Activated CD4-positive, alpha-beta memory T cell treated with anti-CD3 and anti-CD28 coated beads for 36 hours (primary cell): ENCODE measurements at regions of chr4 and their contacts with region 1.

Region 1: GRCh38 chr4:105135785-105136184 is 10.9 kb upstream of the TET2 start:
- DNase-seq: no peak
- H3K4me3 Mint-ChIP-seq: no peak overlapping the region
- H3K27ac Mint-ChIP-seq: no peak overlapping the region
- H3K4me1 Mint-ChIP-seq: peaks cover 28% of the 10 kb centered on the region
- H3K27me3 Mint-ChIP-seq: no peaks in the 10 kb centered on the region

Region 2: GRCh38 chr4:104763554-104764222 is 372.1 kb before region 1 on chr4:
- CTCF ChIA-PET with region 1: no interaction called
- POLR2A ChIA-PET with region 1: no interaction called
- intact Hi-C with region 1: no loop called
- DNase-seq: no peak
- H3K4me3 Mint-ChIP-seq: no peak overlapping the region
- H3K27ac Mint-ChIP-seq: no peak overlapping the region
- H3K4me1 Mint-ChIP-seq: no peaks in the 10 kb centered on the region
- H3K27me3 Mint-ChIP-seq: no peaks in the 10 kb centered on the region

Region 3: GRCh38 chr4:104930298-104930697 is 205.5 kb before region 1 on chr4:
- CTCF ChIA-PET with region 1: no interaction called
- POLR2A ChIA-PET with region 1: no interaction called
- intact Hi-C with region 1: loop called (anchors 2 kb)
- DNase-seq: no peak
- H3K4me3 Mint-ChIP-seq: no peak overlapping the region
- H3K27ac Mint-ChIP-seq: no peak overlapping the region
- H3K4me1 Mint-ChIP-seq: peaks cover 30% of the 10 kb centered on the region
- H3K27me3 Mint-ChIP-seq: no peaks in the 10 kb centered on the region

Region 4: GRCh38 chr4:105146276-105147015 is 10.7 kb after region 1 on chr4 and contains the start of gene TET2:
- CTCF ChIA-PET with region 1: no interaction called
- POLR2A ChIA-PET with region 1: interaction called, 5 read pairs
- intact Hi-C with region 1: loop called (anchors 1 kb)
- DNase-seq: peak; percentile 88
- H3K4me3 Mint-ChIP-seq: peak within 1 kb of the TSS; percentile 99
- H3K27ac Mint-ChIP-seq: peak within 1 kb of the TSS; percentile 99
- H3K4me1 Mint-ChIP-seq: peaks cover 35% of the 10 kb centered on the region
- H3K27me3 Mint-ChIP-seq: no peaks in the 10 kb centered on the region
- total RNA-seq, gene TET2: 30.2 to 30.6 TPM

Region 5: GRCh38 chr4:105215609-105216313 is 80.0 kb after region 1 on chr4:
- CTCF ChIA-PET with region 1: no interaction called
- POLR2A ChIA-PET with region 1: no interaction called
- intact Hi-C with region 1: loop called (anchors 1 kb)
- DNase-seq: no peak
- H3K4me3 Mint-ChIP-seq: peak overlapping the region; percentile 14
- H3K27ac Mint-ChIP-seq: peak overlapping the region; percentile 65
- H3K4me1 Mint-ChIP-seq: peaks cover 42% of the 10 kb centered on the region
- H3K27me3 Mint-ChIP-seq: no peaks in the 10 kb centered on the region

Region 6: DNA sequence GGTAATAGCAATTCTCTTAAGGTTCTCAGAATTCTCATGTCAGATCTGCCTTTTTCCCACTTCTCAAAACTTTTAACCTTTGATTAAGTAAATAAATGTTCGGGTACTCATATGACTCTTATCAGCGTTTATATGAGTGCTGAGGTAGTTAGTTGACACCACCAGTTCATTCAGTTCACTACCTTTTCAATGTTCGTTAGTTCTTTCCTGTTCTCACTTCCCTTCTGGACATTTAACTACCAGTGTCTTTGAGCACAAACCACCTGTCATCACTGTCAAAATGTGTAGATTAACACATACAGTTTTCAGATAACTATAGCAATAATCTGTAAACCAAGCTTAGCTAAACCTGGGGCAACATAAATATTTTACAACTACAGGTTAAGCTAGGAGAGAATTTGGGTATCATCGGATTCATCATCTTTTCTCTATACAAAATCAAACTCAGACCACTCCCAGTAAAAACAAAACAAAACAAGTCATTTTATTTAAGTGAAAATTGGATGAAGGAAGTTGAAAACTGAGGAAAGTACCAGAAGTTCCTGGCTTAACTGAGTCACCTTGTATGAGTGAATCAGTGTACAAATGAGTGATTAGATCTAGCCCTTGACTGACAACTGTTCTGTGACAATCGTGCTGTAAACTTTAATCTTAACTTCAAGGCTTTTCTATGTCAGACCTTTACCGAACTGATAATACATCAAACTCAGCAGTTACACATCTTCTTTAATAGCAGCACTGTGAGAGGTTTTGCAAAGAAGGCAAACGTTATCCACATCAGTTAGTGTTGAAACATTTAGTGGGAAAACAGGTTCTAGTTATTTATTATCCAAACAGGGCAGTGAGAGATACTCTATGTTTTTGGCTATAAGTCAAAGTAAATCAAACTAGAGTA is 458.6 kb after region 1 on chr4:
- CTCF ChIA-PET with region 1: no interaction called
- POLR2A ChIA-PET with region 1: no interaction called
- intact Hi-C with region 1: loop called (anchors 10 kb)
- DNase-seq: no peak
- H3K4me3 Mint-ChIP-seq: no peak overlapping the region
- H3K27ac Mint-ChIP-seq: no peak overlapping the region
- H3K4me1 Mint-ChIP-seq: peaks cover 7% of the 10 kb centered on the region
- H3K27me3 Mint-ChIP-seq: peaks cover 21% of the 10 kb centered on the region